ENCODE measurements at regions of chr15 and their contacts with region 1.

Region 1: DNA sequence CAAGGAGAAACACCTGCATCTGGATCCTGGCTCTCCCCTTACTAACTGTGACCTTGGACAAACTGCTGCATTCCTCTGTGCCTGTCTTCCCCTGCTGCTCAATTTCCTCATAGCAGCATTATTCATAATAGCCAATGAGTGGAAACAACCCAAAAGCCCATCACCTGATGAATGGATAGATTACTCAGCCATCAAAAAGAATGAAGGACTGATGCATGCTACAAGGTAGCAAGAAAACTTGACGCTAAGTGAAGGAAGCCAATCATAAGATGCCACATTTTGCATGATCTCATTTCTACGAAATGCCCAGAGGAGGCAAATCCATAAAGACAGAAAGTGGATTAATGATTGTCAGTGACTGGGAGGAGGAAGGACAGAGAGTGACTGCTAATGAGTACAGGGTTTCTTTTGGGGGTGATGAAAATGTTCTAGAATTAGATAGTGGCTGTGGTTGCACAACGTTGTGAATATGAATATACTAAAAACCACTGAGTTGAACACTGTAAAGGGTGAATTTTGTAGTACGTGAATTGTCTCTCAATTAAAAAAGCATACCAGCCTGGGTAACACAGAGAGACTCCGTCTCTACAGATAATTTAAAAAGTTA is 11.2 kb downstream of the IGDCC4 start:
- DNase-seq: no peak
- H3K4me3 ChIP-seq: no peak overlapping the region
- H3K27ac ChIP-seq: no peak overlapping the region
- H3K4me1 ChIP-seq: peaks cover 16% of the 10 kb centered on the region
- CTCF ChIP-seq: no peak

Region 2: GRCh38 chr15:65423976-65424679 is 12.6 kb after region 1 on chr15:
- CTCF ChIA-PET with region 1: no interaction called
- POLR2A ChIA-PET with region 1: no interaction called
- intact Hi-C with region 1: loop called (anchors 1 kb)
- DNase-seq: no peak
- H3K4me3 ChIP-seq: no peak overlapping the region
- H3K27ac ChIP-seq: no peak overlapping the region
- H3K4me1 ChIP-seq: no peaks in the 10 kb centered on the region
- CTCF ChIP-seq: no peak

Measured in OCI-LY7 (cell line).